ENCODE measurements at regions of chr2 and their contacts with region 1.

Region 1: DNA sequence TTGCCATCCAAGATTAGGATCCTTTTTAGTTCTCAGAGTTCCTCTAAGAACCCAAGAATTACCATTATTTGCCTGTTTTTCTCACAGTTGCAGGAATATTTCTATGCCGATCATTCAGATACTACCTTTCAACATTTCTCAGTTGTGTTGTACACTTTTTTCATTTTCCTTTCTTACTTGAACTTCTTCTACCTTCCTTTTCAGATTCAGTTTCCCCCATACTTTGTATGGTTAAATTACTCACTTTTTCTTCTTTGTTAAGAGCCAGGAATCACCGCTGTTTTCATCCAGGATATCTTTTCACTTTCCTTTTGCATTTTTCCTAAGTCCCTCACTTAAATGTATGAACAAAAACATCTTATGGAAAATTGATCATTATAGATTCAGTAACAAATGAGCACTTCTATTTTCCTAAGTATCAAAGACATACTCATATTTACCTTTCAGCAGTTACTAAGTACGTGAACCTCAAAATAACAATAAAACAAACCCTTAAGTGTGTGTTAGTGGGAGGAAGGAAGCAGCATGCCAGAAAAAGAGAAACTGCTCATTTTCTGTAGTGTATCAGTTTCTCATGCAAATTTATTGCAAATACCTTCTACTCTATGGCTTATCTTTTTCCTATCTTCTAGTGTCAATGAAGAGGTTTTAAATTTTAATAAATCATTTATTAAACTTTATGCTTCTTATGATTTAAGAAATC is 64.3 kb upstream of the STAT1 start:
- DNase-seq: no peak
- ATAC-seq: peak; percentile 81
- H3K4me3 Mint-ChIP-seq: peak overlapping the region; percentile 64
- H3K27ac Mint-ChIP-seq: peak overlapping the region; percentile 83
- H3K4me1 Mint-ChIP-seq: peaks cover 20% of the 10 kb centered on the region
- H3K27me3 Mint-ChIP-seq: no peaks in the 10 kb centered on the region

Region 2: DNA sequence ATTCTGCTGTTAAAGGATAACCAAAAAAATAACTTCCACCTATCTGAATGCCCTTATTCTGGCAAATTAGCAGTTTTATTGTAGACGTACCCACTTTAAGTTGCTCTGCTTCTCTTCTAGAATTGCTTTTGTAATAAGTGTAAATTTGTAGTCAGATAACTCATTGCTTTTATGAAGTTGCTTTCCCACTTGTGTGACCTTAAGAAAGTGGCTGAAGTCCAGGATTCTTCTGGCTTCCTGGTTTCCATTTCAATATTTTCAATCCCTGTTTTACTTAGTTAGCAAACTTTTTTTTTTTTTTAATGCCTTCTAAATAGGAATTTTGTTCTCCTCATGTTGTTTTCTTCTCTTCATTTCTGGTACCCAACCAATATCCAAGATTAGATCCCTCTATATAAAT is 137.9 kb before region 1 on chr2:
- CTCF ChIA-PET with region 1: no interaction called
- POLR2A ChIA-PET with region 1: no interaction called
- intact Hi-C with region 1: no loop called
- DNase-seq: no peak
- ATAC-seq: no peak
- H3K4me3 Mint-ChIP-seq: no peak overlapping the region
- H3K27ac Mint-ChIP-seq: no peak overlapping the region
- H3K4me1 Mint-ChIP-seq: peaks cover 7% of the 10 kb centered on the region
- H3K27me3 Mint-ChIP-seq: no peaks in the 10 kb centered on the region

Region 3: DNA sequence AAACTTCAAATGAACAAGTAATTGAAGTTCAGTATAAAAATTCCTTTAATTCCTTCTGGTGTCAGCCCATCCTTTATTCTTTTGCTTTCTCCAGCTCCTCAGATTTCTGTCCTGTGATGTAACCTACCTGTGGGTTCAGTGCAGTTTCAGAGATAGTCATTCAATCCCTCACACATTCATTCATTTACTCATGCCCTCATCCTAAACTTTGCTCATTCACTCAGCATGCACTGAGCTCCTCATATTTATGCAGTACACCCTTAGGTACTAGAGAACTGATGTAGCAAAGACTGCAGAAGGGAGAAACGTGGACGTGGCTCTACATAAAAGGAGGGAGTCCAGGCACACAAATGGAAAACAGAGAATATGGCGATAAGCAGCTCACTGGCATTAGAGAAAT is 19.0 kb before region 1 on chr2:
- CTCF ChIA-PET with region 1: interaction called, 4 read pairs
- POLR2A ChIA-PET with region 1: no interaction called
- intact Hi-C with region 1: loop called in 1 of 2 experiments (anchors 1 kb)
- DNase-seq: no peak
- ATAC-seq: peak; percentile 89
- H3K4me3 Mint-ChIP-seq: no peak overlapping the region
- H3K27ac Mint-ChIP-seq: no peak overlapping the region
- H3K4me1 Mint-ChIP-seq: peaks cover 63% of the 10 kb centered on the region
- H3K27me3 Mint-ChIP-seq: no peaks in the 10 kb centered on the region

Measured in activated CD4-positive, alpha-beta T cell treated with anti-CD3 and anti-CD28 coated beads for 36 hours (primary cell).